ENCODE measurements at regions of chr15 and their contacts with region 1.

Region 1: DNA sequence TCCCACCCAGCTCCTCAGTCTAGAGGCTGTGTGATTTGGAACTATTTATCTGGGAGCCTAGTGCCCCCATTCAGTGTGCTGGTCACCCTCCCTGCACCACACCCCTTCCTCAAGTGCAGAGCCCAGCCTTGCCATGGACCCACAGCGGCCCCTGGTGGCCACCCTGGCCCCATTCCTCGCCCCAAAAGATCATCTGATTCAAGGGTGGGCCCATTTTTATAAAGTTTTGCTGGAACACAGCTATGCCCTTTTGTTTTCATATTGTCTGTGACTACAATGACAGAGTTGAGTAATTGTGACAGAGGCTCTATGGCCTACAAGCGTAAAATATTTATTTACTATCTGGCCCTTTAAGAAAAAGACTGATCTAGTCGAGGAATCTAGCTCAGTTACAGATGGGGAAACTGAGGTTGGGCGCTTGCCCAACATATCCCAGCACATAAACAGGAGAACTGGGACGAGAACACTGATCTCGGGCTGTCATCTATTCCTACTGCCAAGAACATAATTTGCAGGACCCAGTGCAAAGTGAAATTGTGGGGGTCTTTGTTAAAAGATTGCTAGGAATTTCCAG is 1.8 kb downstream of the FES start:
- DNase-seq: peak; percentile 62
- ATAC-seq: peak; percentile 72
- H3K4me3 ChIP-seq: no peak overlapping the region
- H3K27ac ChIP-seq: no peak overlapping the region
- H3K4me1 ChIP-seq: no peaks in the 10 kb centered on the region
- H3K27me3 ChIP-seq: no peaks in the 10 kb centered on the region
- CTCF ChIP-seq: peak; percentile 97

Region 2: DNA sequence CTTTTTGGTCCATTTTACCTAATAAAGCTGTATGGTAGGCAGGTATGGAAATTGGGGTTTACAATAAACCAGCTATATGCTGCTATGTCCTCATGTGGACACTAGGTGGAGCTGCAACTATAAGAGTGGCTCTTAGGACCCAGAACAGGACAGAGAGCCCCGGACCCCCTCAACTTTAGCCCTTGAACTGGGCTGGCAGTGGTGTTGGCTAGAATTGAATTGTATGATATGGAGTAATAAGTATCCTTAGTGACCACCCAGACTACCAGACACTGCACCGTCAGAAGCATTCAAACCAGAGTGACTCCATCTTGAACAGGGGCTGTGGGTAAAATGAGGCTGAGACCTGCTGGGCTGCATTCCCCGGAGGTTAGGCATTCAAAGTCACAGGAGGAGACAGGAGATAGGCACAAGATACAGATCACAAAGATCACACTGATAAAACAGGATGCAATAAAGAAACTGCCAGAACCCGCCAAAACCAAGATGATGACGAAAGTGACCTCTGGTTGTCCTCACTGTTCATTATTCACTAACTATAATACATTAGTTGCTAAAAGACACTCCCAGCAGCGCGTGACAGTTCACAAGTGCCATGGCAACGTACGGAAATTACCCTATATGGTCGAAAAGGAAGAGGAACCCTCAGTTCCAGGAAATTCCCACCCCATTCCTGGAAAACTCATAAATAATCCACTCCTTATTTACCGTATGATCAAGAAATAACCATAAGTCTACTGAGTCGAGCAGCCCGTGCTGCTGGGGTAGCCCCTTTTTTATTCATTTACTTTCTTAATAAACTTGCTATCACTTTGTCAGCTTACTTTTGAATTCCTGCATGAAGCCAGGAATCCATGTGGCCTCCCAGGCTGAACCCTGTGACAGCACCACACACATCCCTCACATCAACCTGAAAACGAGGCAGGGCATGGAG is 237.7 kb before region 1 on chr15:
- CTCF ChIA-PET with region 1: interaction called, 11 read pairs
- POLR2A ChIA-PET with region 1: no interaction called
- intact Hi-C with region 1: loop called (anchors 1 kb)
- DNase-seq: peak; percentile 83
- ATAC-seq: peak; percentile 66
- H3K4me3 ChIP-seq: peak overlapping the region; percentile 30; the same call in 1 of the 2 replicates
- H3K27ac ChIP-seq: peak overlapping the region; percentile 46
- H3K4me1 ChIP-seq: peaks cover 21% of the 10 kb centered on the region
- H3K27me3 ChIP-seq: no peaks in the 10 kb centered on the region
- CTCF ChIP-seq: peak; percentile 91

Region 3: DNA sequence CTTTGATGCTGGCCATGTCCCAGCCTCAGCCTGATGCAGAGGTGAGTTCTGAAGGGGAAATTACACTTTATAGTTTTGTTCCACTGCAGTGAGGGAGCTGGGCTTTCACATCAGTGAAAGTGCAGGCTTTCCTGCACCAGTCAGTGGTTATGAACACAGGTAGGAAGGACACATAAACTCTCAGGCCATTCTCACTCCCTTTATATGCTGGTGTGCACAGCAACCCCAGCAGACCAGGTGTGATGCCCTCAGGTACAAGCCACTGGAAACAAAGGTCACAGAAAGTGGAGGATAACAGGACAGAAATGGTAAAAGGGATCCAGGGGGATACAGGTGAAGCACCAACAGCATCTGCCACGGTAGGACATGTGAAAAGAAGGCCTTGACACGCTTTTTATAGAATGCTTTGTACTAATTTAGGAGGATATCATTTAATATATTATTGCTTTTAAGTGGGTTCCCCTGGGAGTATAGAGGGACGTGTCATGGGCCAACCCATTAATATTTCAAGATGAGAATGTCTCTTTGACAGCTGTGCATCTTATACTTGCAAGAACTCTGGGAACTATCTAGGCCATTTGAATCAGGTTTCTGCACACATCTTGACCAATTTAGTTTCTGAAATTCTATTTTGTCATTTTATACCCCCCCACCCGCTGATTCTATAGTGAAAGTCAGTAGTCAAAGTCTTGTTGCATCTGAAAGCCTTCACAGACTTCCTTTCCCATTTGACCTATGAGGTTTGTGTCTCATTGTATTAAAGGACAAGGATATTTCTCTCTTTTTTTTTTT is 193.9 kb before region 1 on chr15:
- CTCF ChIA-PET with region 1: no interaction called
- POLR2A ChIA-PET with region 1: no interaction called
- intact Hi-C with region 1: loop called (anchors 2 kb)
- DNase-seq: no peak
- ATAC-seq: no peak
- H3K4me3 ChIP-seq: no peak overlapping the region
- H3K27ac ChIP-seq: no peak overlapping the region
- H3K4me1 ChIP-seq: no peaks in the 10 kb centered on the region
- H3K27me3 ChIP-seq: no peaks in the 10 kb centered on the region
- CTCF ChIP-seq: no peak

Region 4: GRCh38 chr15:90716976-90717821 is 168.9 kb before region 1 on chr15 and contains the start of gene BLM:
- CTCF ChIA-PET with region 1: no interaction called
- POLR2A ChIA-PET with region 1: no interaction called
- intact Hi-C with region 1: loop called (anchors 5 kb)
- DNase-seq: peak; percentile 96
- ATAC-seq: peak; percentile 99
- H3K4me3 ChIP-seq: peak within 1 kb of the TSS; percentile 75
- H3K27ac ChIP-seq: peak within 1 kb of the TSS; percentile 29; the same call in 1 of the 2 replicates
- H3K4me1 ChIP-seq: peaks cover 5% of the 10 kb centered on the region; the same call in 1 of the 2 replicates
- H3K27me3 ChIP-seq: no peaks in the 10 kb centered on the region
- CTCF ChIP-seq: no peak
- total RNA-seq, gene BLM: 10.3 and 18.7 TPM in 2 replicates

Region 5: DNA sequence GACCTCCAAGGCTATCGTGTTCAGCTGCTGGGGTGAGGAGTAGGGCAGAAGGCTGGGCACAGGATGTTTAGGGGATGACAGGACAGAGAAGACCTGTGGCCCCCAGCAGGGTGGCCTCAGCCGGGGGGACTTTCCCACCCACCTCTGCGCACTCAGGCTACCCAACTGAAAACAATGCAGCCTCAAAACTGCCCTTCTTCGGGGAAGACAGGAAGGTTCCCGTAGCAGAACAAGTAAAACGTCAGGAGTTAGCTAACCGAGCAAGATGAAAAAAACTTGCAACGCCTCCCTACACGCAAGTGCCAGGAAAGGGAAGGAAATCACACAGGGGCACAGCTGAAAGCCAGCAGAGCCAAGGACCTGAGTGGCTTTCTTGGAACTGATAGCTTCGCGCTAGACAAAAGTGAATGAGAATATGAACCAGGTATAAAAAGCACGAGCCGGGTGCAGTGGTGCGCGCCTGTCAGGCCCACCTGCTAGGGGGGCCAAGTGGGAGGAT is 56.1 kb before region 1 on chr15:
- CTCF ChIA-PET with region 1: no interaction called
- POLR2A ChIA-PET with region 1: no interaction called
- intact Hi-C with region 1: no loop called
- DNase-seq: no peak
- ATAC-seq: no peak
- H3K4me3 ChIP-seq: no peak overlapping the region
- H3K27ac ChIP-seq: no peak overlapping the region
- H3K4me1 ChIP-seq: no peaks in the 10 kb centered on the region
- H3K27me3 ChIP-seq: no peaks in the 10 kb centered on the region
- CTCF ChIP-seq: no peak